ENCODE measurements at regions of chr16 and their contacts with region 1.

Region 1: GRCh38 chr16:31487720-31488467 is 5.0 kb downstream of the SLC5A2 start:
- DNase-seq: peak; percentile 59
- ATAC-seq: peak; percentile 95
- H3K4me3 Mint-ChIP-seq: peak overlapping the region; percentile 86
- H3K27ac Mint-ChIP-seq: no peak overlapping the region
- H3K4me1 Mint-ChIP-seq: peaks cover 9% of the 10 kb centered on the region
- H3K27me3 Mint-ChIP-seq: peaks cover 7% of the 10 kb centered on the region
- CTCF ChIP-seq: no peak

Region 2: DNA sequence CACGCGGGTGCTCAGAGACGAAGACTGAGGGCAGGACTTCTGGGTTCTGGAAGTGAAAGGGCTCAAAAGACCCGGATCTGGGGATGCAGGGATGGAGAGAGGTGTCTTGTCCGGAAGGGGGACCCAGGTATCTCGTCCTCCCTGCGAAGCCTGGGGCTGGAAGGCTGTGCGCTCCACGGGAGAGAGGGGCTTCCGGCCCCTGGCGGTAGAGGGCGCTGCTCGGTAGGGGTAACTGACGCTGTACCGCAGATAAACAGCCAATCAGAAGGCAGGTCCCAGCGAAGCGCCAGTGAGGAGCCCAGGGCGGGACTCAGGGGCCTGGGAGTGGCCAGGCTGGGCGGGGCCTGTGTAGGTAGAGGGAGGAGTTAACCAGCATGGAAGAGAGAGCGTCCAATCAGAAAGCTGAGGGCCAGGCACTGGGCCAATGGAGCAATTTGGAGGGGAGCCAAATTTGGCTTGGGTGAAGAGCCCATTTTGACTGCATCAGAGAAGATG is 15.1 kb before region 1 on chr16:
- CTCF ChIA-PET with region 1: no interaction called
- POLR2A ChIA-PET with region 1: interaction called, 5 read pairs
- intact Hi-C with region 1: loop called (anchors 1 kb)
- DNase-seq: no peak
- ATAC-seq: no peak
- H3K4me3 Mint-ChIP-seq: peak overlapping the region; percentile 78
- H3K27ac Mint-ChIP-seq: no peak overlapping the region
- H3K4me1 Mint-ChIP-seq: peaks cover 43% of the 10 kb centered on the region
- H3K27me3 Mint-ChIP-seq: no peaks in the 10 kb centered on the region
- CTCF ChIP-seq: no peak